Gastrocnemius medialis (tissue), 4 donors: ENCODE measurements at regions of chr20 and their contacts with region 1.

Region 1: GRCh38 chr20:44683263-44684046 is 31.7 kb upstream of the CCN5 start:
- DNase-seq: no peak
- ATAC-seq: peak; percentile 51 to 53
- H3K4me3 ChIP-seq: no peak overlapping the region
- H3K27ac ChIP-seq: no peak overlapping the region
- H3K4me1 ChIP-seq: peaks cover 4 to 8% of the 10 kb centered on the region in 2 donors
- H3K27me3 ChIP-seq: no peaks in the 10 kb centered on the region
- CTCF ChIP-seq: peak in 4 of 5 experiments; percentile 20 to 68 (median 50)
- POLR2A ChIP-seq: no peak

Region 2: GRCh38 chr20:44135012-44135412 is 548.4 kb before region 1 on chr20:
- in situ Hi-C with region 1: no loop called
- intact Hi-C with region 1: no loop called
- DNase-seq: peak in 1 of 2 donors; percentile 9
- ATAC-seq: no peak
- H3K4me3 ChIP-seq: no peak overlapping the region
- H3K27ac ChIP-seq: peak overlapping the region; percentile 70 to 93 (median 92)
- H3K4me1 ChIP-seq: peaks cover 30 to 35% of the 10 kb centered on the region in 2 donors
- H3K27me3 ChIP-seq: no peaks in the 10 kb centered on the region
- CTCF ChIP-seq: no peak
- POLR2A ChIP-seq: no peak

Region 3: DNA sequence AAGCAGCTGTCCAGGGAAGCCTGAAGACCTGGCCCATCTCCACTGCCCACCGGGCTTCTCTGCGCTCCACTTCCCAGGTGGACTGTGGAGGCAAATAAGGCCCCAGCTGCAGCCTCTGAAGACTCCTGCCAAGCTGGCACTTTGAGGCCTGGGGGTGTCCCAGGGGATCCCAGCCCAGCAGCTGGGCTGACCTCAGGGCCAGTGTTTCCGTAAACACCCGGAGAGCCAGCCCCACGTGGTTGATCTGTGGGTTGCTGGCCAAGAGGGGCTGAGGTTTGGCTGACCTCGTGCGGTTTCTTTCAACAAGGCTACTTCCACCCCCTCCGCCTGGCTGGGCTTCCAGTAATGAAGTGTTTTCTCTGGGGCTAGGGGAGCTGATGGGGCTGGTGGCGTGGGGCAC is 19.3 kb after region 1 on chr20:
- in situ Hi-C with region 1: no loop called
- intact Hi-C with region 1: no loop called
- DNase-seq: peak; percentile 76 to 88
- ATAC-seq: peak; percentile 76 to 84
- H3K4me3 ChIP-seq: no peak overlapping the region
- H3K27ac ChIP-seq: peak overlapping the region; percentile 71 to 84 (median 76)
- H3K4me1 ChIP-seq: peaks cover 40 to 46% of the 10 kb centered on the region in 2 donors
- H3K27me3 ChIP-seq: no peaks in the 10 kb centered on the region
- CTCF ChIP-seq: no peak
- POLR2A ChIP-seq: no peak

Region 4: GRCh38 chr20:44733341-44734069 is 50.0 kb after region 1 on chr20:
- in situ Hi-C with region 1: loop called (anchors 5 kb)
- intact Hi-C with region 1: loop called (anchors 1 kb)
- DNase-seq: peak; percentile 53 to 70
- ATAC-seq: peak; percentile 37 to 45
- H3K4me3 ChIP-seq: no peak overlapping the region
- H3K27ac ChIP-seq: no peak overlapping the region
- H3K4me1 ChIP-seq: peaks cover 30 to 36% of the 10 kb centered on the region in 2 donors
- H3K27me3 ChIP-seq: no peaks in the 10 kb centered on the region
- CTCF ChIP-seq: peak; percentile 94 to 98 (median 96)
- POLR2A ChIP-seq: no peak

Region 5: DNA sequence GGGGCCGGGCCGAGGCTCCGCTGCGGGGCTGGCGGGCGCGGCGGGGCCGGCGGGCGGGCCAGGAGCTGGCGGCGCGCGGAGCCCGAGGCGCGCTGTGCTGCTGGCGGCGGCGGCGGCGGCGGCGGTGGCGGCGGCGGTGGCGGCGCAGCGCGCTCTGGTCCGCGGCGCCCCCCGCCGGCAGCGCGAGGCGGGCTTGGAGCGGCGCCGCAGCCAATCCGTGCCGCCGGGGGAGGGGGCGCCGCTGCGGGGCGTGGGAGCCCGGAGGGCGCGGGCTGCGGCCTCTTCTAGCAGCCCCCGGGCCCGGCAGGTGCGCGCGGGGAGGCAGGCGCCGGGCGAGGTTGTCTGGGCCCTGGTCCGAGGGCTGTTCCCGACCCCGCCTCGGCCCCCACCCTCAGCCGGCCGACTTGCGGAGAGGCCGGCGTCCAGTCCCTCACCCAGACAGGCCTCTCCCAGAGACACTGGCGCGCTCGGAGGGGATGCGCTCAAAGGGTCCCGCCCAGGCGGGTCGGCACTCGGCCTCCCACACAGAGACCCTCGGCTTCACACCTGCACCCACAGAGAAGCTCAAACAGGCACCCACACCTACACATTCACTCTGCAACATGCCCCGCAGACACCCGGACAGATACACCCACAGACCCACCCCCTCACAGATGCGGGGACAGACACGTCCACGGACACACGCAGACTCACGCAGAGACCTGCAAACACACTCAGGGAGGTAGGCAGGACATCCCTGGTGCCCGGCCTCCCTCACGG is 127.1 kb after region 1 on chr20 and contains the start of gene RIMS4:
- in situ Hi-C with region 1: no loop called
- intact Hi-C with region 1: loop called (anchors 1 kb)
- DNase-seq: no peak
- ATAC-seq: peak in 1 of 2 donors; percentile 42
- H3K4me3 ChIP-seq: peak within 1 kb of the TSS; percentile 24 to 48 (median 33)
- H3K27ac ChIP-seq: no peak within 1 kb of the TSS
- H3K4me1 ChIP-seq: peaks cover 3 to 23% of the 10 kb centered on the region in 2 donors
- H3K27me3 ChIP-seq: peaks cover 11 to 28% (median 15%) of the 10 kb centered on the region in 3 donors
- CTCF ChIP-seq: peak in 1 of 5 experiments; percentile 14
- POLR2A ChIP-seq: no peak
- total RNA-seq, gene RIMS4: 0.13 to 0.41 TPM in 2 of 4 donors, not detected in the others

Region 6: DNA sequence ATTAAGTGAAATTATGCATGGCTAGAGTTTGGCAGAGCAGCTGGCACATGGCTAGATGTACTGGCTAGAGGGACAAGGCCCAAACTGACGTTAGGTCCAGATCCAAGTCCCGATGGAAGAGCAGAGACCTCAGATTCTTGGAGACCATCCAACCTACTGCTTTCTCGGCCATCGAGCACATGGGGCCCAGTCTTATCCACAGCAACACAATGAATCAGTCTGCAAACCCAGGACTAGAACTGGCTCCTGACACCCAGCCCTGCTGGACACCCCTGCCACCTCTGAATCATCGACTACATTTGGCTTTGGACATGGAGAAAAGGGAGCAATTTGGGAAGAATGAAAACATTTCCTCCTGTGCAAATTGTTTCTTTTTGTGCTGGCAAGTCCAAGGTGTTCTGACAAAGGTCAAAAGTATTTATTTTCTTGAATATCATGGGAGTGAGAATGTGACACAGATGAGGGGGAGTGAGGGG is 178.1 kb after region 1 on chr20:
- in situ Hi-C with region 1: loop called (anchors 5 to 10 kb)
- intact Hi-C with region 1: loop called (anchors 5 kb)
- DNase-seq: peak; percentile 18 to 48
- ATAC-seq: peak; percentile 78 to 88
- H3K4me3 ChIP-seq: no peak overlapping the region
- H3K27ac ChIP-seq: peak overlapping the region in 1 of 4 donors; percentile 11
- H3K4me1 ChIP-seq: peaks cover 6 to 9% of the 10 kb centered on the region in 2 donors
- H3K27me3 ChIP-seq: no peaks in the 10 kb centered on the region
- CTCF ChIP-seq: no peak
- POLR2A ChIP-seq: no peak

Region 7: DNA sequence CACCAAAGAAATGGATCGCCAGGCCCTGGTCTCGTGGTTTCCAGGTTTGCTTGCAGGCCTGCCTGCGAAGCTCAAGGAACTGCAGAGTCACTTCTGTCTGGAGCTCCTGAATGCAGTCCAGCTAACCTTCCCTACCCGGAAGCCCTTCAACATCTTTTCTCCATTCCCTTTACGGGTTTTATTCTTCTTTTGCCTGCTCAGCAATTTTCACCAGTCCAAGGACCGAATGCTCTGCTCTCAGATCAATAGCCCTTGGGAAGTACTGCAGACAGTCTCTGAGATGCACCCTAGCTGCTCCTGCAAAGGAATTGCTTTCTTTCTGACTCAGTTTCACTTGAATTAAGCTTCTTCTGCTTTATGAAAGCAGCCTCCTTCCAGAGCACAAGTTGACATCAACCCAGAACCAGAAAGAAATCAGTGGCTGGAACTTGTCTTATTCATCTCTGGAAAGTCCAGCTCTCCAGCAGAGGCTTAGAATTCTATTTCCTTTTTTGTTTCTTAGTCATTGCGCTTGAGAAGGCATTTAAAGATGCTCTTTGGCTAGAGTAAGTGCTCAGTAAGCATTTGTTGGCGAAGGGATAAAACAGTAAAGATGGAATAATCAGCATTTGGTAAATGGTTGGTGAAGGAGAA is 183.4 kb after region 1 on chr20:
- in situ Hi-C with region 1: loop called (anchors 5 to 10 kb)
- intact Hi-C with region 1: loop called (anchors 5 kb)
- DNase-seq: no peak
- ATAC-seq: no peak
- H3K4me3 ChIP-seq: peak overlapping the region in 1 of 4 donors; percentile 25
- H3K27ac ChIP-seq: no peak overlapping the region
- H3K4me1 ChIP-seq: peaks cover 2 to 12% of the 10 kb centered on the region in 2 donors
- H3K27me3 ChIP-seq: no peaks in the 10 kb centered on the region
- CTCF ChIP-seq: no peak
- POLR2A ChIP-seq: no peak

Region 8: DNA sequence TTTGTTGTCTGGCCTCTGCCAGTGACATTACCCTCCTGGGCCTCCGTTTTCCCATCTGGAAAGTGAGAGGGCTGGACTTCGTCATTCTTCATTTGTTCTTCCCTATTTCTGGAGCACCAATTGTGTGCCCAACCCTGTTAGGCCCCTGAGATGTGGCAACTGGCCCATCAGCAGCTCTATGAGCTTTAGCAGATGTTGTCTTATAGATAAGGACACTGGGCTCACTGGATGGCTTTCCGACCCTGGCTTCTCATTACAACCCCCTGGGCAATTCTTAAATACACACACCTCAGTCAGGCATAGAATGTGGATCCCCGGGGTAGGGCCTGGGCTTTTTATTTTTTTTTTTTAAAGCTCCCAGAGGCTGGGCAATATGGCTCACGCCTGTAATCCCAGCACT is 241.1 kb after region 1 on chr20:
- in situ Hi-C with region 1: no loop called
- intact Hi-C with region 1: no loop called
- DNase-seq: no peak
- ATAC-seq: no peak
- H3K4me3 ChIP-seq: no peak overlapping the region
- H3K27ac ChIP-seq: no peak overlapping the region
- H3K4me1 ChIP-seq: no peaks in the 10 kb centered on the region
- H3K27me3 ChIP-seq: no peaks in the 10 kb centered on the region
- CTCF ChIP-seq: no peak
- POLR2A ChIP-seq: no peak

Region 9: GRCh38 chr20:45329510-45330319 is 646.3 kb after region 1 on chr20:
- in situ Hi-C with region 1: no loop called
- intact Hi-C with region 1: no loop called
- DNase-seq: no peak
- ATAC-seq: no peak
- H3K4me3 ChIP-seq: no peak overlapping the region
- H3K27ac ChIP-seq: peak overlapping the region; percentile 58 to 100 (median 94)
- H3K4me1 ChIP-seq: peaks cover 0 to 7% of the 10 kb centered on the region in 2 donors
- H3K27me3 ChIP-seq: no peaks in the 10 kb centered on the region
- CTCF ChIP-seq: no peak
- POLR2A ChIP-seq: no peak